ENCODE measurements at regions of chr3 and their contacts with region 1.

Region 1: DNA sequence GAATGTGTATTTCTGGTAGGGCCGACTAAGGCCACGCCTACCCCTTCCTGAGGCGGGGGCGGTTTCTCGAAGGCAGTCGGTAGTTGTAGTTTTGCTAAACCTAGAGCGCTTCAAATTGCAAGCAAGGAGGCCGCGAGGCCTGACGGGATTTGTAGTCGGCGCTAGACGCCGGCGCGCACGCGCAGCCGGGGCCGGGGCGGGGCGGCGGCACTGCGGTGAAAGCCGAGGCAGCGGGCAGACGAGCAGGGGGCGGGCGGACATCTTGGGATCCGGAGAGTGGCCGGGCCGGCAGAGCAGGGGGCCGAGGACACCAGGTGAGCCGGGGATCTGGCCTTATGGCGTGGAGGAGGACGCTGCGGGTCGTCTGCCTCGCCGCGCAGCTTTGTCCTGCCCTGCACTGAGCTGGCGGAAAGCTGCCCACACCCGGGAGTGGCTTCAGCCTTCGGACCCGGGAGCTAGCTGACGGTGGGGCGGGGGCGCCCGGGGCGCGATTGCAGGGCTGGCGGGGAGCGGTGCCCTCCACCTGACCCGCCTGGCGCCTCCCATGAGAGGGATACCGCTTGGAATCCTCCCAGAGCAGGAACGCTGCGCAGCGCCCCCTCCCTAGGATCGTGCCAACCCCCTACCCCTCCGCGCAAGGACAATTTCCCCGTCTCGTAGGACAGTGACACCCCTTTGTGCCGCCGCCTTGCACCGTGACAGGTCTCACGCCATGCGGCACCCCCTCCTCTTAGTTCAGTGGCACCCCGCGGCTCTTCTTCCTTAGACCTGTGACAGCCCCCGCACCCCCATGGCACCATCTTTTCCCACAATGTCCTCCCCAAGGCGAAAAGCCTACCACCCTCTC is at the start of gene AP2M1:
- DNase-seq: peak; percentile 99
- H3K4me3 Mint-ChIP-seq: peak within 1 kb of the TSS; percentile 95
- H3K27ac Mint-ChIP-seq: peak within 1 kb of the TSS; percentile 85
- H3K4me1 Mint-ChIP-seq: peaks cover 28% of the 10 kb centered on the region
- H3K27me3 Mint-ChIP-seq: no peaks in the 10 kb centered on the region
- total RNA-seq, gene AP2M1: 235 and 238 TPM in 2 replicates

Region 2: DNA sequence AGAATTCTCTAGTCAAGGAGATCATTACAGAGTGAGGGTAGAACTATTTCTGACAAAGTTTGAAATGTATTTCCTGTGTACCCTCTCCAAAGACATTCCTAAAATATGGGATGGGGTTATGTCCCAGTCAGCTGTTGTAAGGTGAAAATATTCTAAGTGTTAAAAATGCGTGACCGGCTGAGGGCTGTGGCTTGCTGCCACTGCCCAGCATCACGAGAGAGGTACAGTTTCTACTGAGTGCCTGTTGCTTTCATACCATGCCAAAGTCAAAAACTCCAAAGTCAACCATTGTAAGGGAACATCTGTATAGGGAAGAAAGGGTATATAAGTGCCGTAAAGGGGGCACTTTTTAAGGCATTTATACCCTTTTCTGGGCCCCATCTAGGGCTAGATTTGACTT is 380.4 kb before region 1 on chr3:
- intact Hi-C with region 1: no loop called
- DNase-seq: no peak
- H3K4me3 Mint-ChIP-seq: no peak overlapping the region
- H3K27ac Mint-ChIP-seq: no peak overlapping the region
- H3K4me1 Mint-ChIP-seq: peaks cover 5% of the 10 kb centered on the region
- H3K27me3 Mint-ChIP-seq: no peaks in the 10 kb centered on the region

Region 3: GRCh38 chr3:184077881-184078280 is 97.0 kb before region 1 on chr3:
- intact Hi-C with region 1: no loop called
- DNase-seq: no peak
- H3K4me3 Mint-ChIP-seq: no peak overlapping the region
- H3K27ac Mint-ChIP-seq: no peak overlapping the region
- H3K4me1 Mint-ChIP-seq: no peaks in the 10 kb centered on the region
- H3K27me3 Mint-ChIP-seq: peaks cover 5% of the 10 kb centered on the region

Region 4: DNA sequence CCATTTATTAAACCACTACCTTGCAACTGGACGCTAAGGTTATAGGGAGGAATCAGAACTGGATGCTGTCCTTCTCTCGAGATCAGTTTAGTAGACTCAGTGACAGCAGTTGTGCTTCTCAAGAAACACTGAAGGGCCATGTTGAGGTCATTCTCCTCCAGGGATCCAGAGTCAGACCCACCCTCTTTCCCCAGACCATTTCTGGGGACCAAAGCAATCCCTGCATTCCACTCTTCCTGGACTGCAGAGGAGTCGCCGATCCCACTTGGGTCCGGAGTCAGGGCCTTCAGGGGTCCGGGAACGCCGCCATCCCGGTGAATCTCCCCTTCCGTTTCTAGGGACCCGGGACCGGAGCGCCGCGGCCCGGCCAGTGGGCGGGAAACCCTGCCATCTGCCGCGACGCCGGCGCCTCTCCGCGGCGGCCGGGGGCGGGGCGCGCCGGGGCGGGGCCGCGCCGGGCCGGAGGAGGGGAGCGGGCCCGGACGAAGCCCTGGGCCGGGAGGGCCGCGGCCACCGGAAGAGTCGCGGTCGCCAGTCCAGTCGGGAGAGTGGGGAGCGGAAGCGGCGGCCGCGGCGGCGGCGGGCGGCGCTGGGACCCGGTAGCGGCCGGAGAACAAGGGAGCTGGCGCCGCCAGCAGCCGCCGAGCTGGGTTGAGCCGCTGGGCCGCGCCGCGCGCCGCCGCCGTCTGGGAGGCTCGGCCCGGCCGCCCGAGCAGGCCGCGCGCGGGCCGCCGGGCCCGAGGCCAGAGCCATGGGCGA is 19.8 kb before region 1 on chr3 and contains the start of gene DVL3:
- intact Hi-C with region 1: loop called (anchors 1 kb)
- DNase-seq: peak; percentile 51
- H3K4me3 Mint-ChIP-seq: peak within 1 kb of the TSS; percentile 95
- H3K27ac Mint-ChIP-seq: peak within 1 kb of the TSS; percentile 88
- H3K4me1 Mint-ChIP-seq: peaks cover 20% of the 10 kb centered on the region
- H3K27me3 Mint-ChIP-seq: peaks cover 5% of the 10 kb centered on the region
- total RNA-seq, gene DVL3: 59.4 and 61.5 TPM in 2 replicates

Measured in activated T-helper 1 cell treated with anti-CD3 and anti-CD28 coated beads, Interleukin-12 subunit alpha, Interleukin-12 subunit beta, Interleukin-2, Interleukin-4 antibody, amounts not matched to agents 30 ng/mL and 10 ng/mL and 1 ng/mL, durations not matched to agents 14 hours and 24 hours and 36 hours (primary cell).